Naive thymus-derived CD4-positive, alpha-beta T cell (primary cell): ENCODE measurements at regions of chr5 and their contacts with region 1.

Region 1: DNA sequence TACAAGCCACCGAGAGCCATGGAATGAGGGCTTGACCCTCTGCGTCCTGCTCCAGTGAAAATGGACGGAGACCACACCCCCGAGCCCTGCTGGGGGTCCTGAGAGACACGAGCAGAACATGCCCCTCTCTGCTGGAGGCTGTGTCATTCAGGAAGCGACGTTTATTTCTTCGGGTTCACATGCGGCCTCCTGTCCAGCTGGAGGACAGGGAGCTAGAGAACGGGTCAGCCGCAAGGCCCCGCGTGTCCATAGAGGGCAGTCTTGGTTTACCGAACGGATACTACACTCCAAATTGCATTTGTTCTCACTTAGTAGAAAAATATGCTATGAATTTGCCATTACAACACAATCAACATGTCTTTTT is 36.1 kb downstream of the MRPL36 start:
- DNase-seq: peak in 6 of 9 donors; percentile 4 to 39 (median 22)
- ATAC-seq: no peak
- H3K4me3 ChIP-seq: no peak overlapping the region
- H3K4me3 Mint-ChIP-seq: no peak overlapping the region
- H3K27ac ChIP-seq: no peak overlapping the region
- H3K27ac Mint-ChIP-seq: no peak overlapping the region
- H3K4me1 ChIP-seq: no peaks in the 10 kb centered on the region
- H3K4me1 Mint-ChIP-seq: peaks cover 0 to 4% (median 0%) of the 10 kb centered on the region in 7 donors
- H3K27me3 ChIP-seq: no peaks in the 10 kb centered on the region
- H3K27me3 Mint-ChIP-seq: peaks cover 6 to 25% (median 12%) of the 10 kb centered on the region in 5 donors

Region 2: DNA sequence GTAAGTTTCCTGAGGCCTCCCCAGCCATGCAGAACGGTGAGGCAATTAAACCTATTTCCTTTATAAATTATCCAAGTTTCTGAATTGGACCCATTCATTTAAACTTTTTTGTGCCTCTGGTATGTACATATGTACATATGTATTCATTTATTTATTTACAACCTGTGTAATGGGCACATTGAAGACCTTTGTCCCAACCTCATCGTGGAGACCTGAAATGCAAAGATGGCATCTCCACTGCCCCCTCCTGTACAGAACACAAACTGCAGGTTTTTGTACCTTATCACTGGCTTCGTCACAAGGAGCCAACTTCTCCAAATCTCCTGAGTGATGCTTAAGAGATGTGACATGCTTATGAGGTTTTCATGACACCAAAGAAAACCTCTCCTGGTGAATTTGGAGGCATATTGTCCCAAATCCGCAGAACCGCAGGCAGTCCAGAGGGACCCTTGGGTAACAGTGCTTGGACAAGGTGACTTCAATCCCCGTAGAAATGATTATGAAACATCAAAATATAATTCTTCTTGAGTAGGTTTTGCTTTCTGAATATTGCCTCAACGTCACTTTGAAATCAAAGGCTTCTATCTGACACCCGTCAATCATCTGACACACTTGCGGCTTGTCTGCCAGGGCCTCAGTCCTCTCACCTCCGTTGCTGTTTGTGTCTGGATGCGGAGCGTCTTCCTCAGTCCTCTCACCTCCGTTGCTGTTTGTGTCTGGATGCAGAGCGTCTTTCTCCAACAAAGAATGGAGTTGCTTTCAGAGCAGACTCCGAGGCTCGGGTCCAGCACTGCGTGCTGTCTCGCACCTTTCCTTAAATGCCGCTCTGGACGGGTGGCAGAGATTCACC is 254.2 kb after region 1 on chr5:
- CTCF ChIA-PET with region 1: no interaction called
- POLR2A ChIA-PET with region 1: no interaction called
- intact Hi-C with region 1: loop called in 1 of 2 experiments (anchors 1 kb)
- DNase-seq: peak in 4 of 9 donors; percentile 7 to 23 (median 21)
- ATAC-seq: no peak
- H3K4me3 ChIP-seq: no peak overlapping the region
- H3K4me3 Mint-ChIP-seq: no peak overlapping the region
- H3K27ac ChIP-seq: no peak overlapping the region
- H3K27ac Mint-ChIP-seq: no peak overlapping the region
- H3K4me1 ChIP-seq: no peaks in the 10 kb centered on the region
- H3K4me1 Mint-ChIP-seq: no peaks in the 10 kb centered on the region
- H3K27me3 ChIP-seq: no peaks in the 10 kb centered on the region
- H3K27me3 Mint-ChIP-seq: peaks cover 0 to 29% (median 11%) of the 10 kb centered on the region in 5 donors